ENCODE measurements at regions of chr7 and their contacts with region 1.

Region 1: GRCh38 chr7:116984917-116985316 is 31.6 kb downstream of the ST7 start:
- DNase-seq: no peak
- H3K4me3 ChIP-seq: no peak overlapping the region
- H3K27ac ChIP-seq: no peak overlapping the region
- H3K27me3 ChIP-seq: no peaks in the 10 kb centered on the region
- CTCF ChIP-seq: peak; percentile 69

Region 2: GRCh38 chr7:116316833-116317612 is 667.9 kb before region 1 on chr7:
- CTCF ChIA-PET with region 1: no interaction called
- POLR2A ChIA-PET with region 1: no interaction called
- DNase-seq: peak; percentile 90
- H3K4me3 ChIP-seq: peak overlapping the region; percentile 18; the same call in 1 of the 2 replicates
- H3K27ac ChIP-seq: peak overlapping the region; percentile 79
- H3K27me3 ChIP-seq: no peaks in the 10 kb centered on the region
- CTCF ChIP-seq: no peak

Region 3: GRCh38 chr7:116955801-116956476 is 29.0 kb before region 1 on chr7:
- CTCF ChIA-PET with region 1: interaction called, 15 read pairs
- POLR2A ChIA-PET with region 1: no interaction called
- DNase-seq: no peak
- H3K4me3 ChIP-seq: peak overlapping the region; percentile 12
- H3K27ac ChIP-seq: no peak overlapping the region
- H3K27me3 ChIP-seq: no peaks in the 10 kb centered on the region
- CTCF ChIP-seq: no peak

Region 4: DNA sequence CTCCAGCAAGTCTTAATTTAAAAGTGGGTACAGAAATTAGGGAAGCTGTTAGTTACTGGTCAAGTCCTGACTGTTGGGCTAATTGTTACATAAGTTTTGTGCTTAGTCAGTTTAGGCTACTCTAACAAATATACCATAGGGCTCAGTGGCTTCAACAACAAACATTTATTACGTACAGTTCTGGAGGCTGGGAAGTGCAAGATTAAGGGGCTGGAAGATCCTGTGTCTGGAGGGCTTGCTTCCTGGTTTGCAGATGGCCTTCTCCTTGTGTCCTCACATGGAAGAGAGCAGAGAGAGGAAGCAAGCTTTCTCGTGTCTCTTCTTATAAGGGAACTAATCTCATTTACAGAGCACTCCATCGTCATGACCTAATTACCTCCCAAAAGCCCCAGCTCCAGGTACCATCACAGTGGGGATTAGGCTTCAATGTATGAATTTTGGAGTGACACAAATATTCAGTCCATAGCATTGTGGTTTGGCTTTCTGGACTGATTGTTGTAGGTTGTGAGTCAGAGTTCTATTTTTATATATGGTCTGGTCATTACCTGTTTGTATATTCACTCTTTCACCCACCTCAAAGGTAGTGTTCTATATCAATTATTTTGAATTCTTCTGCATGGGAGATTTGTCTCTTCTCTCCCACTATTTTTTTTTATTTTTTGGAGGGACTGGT is 14.5 kb before region 1 on chr7:
- CTCF ChIA-PET with region 1: interaction called, 22 read pairs
- POLR2A ChIA-PET with region 1: no interaction called
- DNase-seq: no peak
- H3K4me3 ChIP-seq: no peak overlapping the region
- H3K27ac ChIP-seq: no peak overlapping the region
- H3K27me3 ChIP-seq: no peaks in the 10 kb centered on the region
- CTCF ChIP-seq: no peak

Region 5: DNA sequence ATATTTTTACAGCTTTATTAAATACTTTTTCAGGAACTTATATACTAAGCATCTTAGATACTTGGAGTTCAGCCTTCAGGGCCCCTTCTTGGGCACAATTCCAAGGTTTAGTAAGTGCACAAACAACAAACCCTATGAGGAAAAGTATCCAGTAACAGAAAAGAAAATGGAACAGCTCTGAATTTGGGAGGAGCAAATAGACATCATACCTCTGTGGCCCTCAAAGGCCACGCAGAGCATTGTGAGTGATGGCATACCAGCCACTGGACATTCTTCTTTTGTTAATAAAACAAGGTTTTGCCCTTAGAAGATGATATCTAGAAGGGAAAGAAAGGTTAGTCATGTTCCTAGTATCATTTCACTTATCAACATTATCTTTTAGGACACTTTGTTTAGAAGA is 14.4 kb after region 1 on chr7:
- CTCF ChIA-PET with region 1: interaction called, 29 read pairs
- POLR2A ChIA-PET with region 1: no interaction called
- DNase-seq: no peak
- H3K4me3 ChIP-seq: no peak overlapping the region
- H3K27ac ChIP-seq: no peak overlapping the region
- H3K27me3 ChIP-seq: no peaks in the 10 kb centered on the region
- CTCF ChIP-seq: no peak

Region 6: GRCh38 chr7:117012696-117013095 is 27.8 kb after region 1 on chr7:
- CTCF ChIA-PET with region 1: interaction called, 19 read pairs
- POLR2A ChIA-PET with region 1: no interaction called
- DNase-seq: no peak
- H3K4me3 ChIP-seq: no peak overlapping the region
- H3K27ac ChIP-seq: no peak overlapping the region
- H3K27me3 ChIP-seq: no peaks in the 10 kb centered on the region
- CTCF ChIP-seq: peak; percentile 53

Region 7: DNA sequence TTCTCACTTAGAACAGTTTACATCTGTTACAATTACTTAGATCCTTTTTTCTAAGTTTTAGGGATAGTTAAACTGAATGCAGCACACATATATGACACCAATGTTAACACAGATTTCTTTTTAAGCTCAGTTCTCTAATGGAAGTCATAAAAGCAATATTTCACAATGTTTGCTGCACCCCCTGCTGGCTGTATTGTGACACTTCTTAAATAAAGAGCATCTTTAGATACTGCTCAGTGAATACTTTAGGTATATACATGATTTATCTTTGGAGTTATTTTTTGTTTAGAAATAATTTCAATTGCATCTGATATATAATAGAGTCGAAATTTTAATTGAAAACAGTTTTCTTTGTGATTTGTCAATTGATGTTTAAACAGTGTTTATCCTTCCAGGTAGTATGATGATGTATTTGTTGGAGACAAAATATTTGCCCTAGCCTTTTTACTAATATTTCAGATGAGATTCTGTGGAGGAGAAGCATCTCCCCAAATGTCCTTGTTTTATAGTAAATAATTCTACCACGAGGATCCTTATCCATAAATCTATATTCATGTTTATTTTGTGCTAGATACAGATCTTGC is 142.8 kb after region 1 on chr7:
- CTCF ChIA-PET with region 1: interaction called, 300 read pairs
- POLR2A ChIA-PET with region 1: no interaction called
- DNase-seq: peak; percentile 21
- H3K4me3 ChIP-seq: no peak overlapping the region
- H3K27ac ChIP-seq: no peak overlapping the region
- H3K27me3 ChIP-seq: no peaks in the 10 kb centered on the region
- CTCF ChIP-seq: peak; percentile 72

Measured in AG04450 (cell line).